ENCODE measurements at regions of chr9 and their contacts with region 1.

Region 1: DNA sequence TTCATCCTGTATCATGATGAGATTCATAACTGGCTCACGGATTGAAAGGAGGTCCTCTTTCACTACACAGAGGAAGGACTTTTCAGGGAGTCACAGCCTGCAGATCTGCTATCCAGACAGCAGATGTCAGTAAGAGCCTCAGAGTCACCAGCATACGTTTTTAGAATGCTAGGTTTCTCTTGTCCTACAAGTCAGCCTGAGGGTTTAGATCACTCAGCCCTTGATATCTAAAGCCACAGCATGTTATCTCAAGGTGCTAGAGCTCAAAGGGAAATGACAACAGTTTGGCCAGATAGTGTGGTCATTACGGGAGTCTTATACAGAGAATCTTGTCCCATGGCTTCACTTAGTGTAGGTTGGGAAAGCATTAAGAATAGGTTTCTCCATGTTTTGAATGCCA is 30.9 kb upstream of the SLC46A2 start:
- DNase-seq: no peak
- H3K4me3 ChIP-seq: no peak overlapping the region
- H3K27ac ChIP-seq: no peak overlapping the region
- H3K4me1 ChIP-seq: no peaks in the 10 kb centered on the region
- H3K27me3 ChIP-seq: peaks cover 0 to 5% (median 2%) of the 10 kb centered on the region in 4 experiments; a peak in 3 of 7 replicates
- CTCF ChIP-seq: peak in 2 of 3 experiments; percentile 75 to 78; a peak in 3 of 4 replicates
- EP300 ChIP-seq: no peak
- POLR2A ChIP-seq: no peak
- RAD21 ChIP-seq: peak; percentile 76 to 83

Region 2: DNA sequence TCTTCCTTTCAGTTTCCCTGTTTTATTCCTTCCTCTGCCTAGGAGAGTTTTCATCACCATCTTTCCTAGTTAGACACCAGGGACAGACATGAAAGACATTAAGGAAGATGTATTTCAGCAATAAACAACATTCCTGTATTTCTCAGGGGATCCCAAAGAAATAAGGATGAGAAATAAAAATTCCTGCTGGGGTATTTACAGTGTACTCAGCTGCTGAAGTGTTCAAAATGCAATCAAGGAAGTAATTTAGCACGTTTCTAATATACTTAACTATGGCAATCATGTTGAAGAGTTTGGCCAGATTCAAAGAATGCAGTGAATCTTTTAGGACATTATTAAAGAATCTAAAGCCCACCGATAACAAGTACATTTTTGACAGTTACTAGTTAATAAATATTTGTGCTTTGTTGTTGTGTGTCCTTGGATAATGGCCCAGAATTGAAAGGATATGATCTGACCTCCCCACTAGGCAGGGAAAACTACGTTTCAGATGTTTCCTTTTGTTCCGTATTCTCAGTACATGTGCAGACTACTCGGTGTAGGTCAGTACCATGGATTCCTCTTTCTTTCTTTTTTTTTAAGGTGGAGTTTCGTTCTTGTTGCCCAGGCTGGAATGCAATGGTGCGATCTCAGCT is 250.4 kb before region 1 on chr9:
- CTCF ChIA-PET with region 1: no interaction called
- POLR2A ChIA-PET with region 1: no interaction called
- DNase-seq: no peak
- H3K4me3 ChIP-seq: no peak overlapping the region
- H3K27ac ChIP-seq: no peak overlapping the region
- H3K4me1 ChIP-seq: no peaks in the 10 kb centered on the region
- H3K27me3 ChIP-seq: no peaks in the 10 kb centered on the region
- CTCF ChIP-seq: no peak
- EP300 ChIP-seq: no peak
- POLR2A ChIP-seq: no peak
- RAD21 ChIP-seq: no peak

Region 3: GRCh38 chr9:112905084-112905483 is 16.5 kb before region 1 on chr9:
- CTCF ChIA-PET with region 1: interaction called, 43 read pairs
- POLR2A ChIA-PET with region 1: no interaction called
- DNase-seq: no peak
- H3K4me3 ChIP-seq: no peak overlapping the region
- H3K27ac ChIP-seq: no peak overlapping the region
- H3K4me1 ChIP-seq: no peaks in the 10 kb centered on the region
- H3K27me3 ChIP-seq: no peaks in the 10 kb centered on the region; a peak in 1 of 7 replicates
- CTCF ChIP-seq: no peak
- EP300 ChIP-seq: no peak
- POLR2A ChIP-seq: no peak
- RAD21 ChIP-seq: no peak

Region 4: DNA sequence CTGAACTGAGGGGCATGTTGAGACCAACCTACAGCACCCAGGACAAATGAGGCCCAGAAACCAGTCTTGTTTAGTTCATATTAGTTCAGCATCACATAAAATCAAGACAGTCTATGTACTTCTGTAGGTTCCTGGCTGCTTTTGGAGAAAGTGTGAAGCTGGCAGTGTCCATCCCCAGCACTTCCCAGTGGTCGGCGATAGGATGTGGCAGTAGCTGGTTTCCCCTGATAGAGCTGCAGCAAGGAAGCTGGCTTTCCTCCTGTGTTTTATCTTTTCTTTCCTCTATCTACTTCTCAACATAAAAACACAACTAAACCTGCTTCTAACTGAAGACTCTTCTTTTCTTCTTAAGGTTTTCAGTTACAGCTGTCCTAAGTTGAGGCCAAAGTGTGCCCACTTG is 12.1 kb after region 1 on chr9:
- CTCF ChIA-PET with region 1: interaction called, 47 read pairs
- POLR2A ChIA-PET with region 1: no interaction called
- DNase-seq: no peak
- H3K4me3 ChIP-seq: no peak overlapping the region
- H3K27ac ChIP-seq: no peak overlapping the region
- H3K4me1 ChIP-seq: no peaks in the 10 kb centered on the region
- H3K27me3 ChIP-seq: peaks cover 0 to 10% (median 0%) of the 10 kb centered on the region in 4 experiments; a peak in 2 of 7 replicates
- CTCF ChIP-seq: no peak
- EP300 ChIP-seq: no peak
- POLR2A ChIP-seq: no peak
- RAD21 ChIP-seq: no peak

Region 5: GRCh38 chr9:112945620-112946208 is 24.2 kb after region 1 on chr9:
- CTCF ChIA-PET with region 1: interaction called, 47 read pairs
- POLR2A ChIA-PET with region 1: no interaction called
- DNase-seq: peak; percentile 41 to 94
- H3K4me3 ChIP-seq: no peak overlapping the region
- H3K27ac ChIP-seq: no peak overlapping the region
- H3K4me1 ChIP-seq: no peaks in the 10 kb centered on the region
- H3K27me3 ChIP-seq: peaks cover 0 to 3% (median under 1%) of the 10 kb centered on the region in 4 experiments; a peak in 3 of 7 replicates
- CTCF ChIP-seq: peak; percentile 90 to 98 (median 91)
- EP300 ChIP-seq: no peak
- POLR2A ChIP-seq: no peak
- RAD21 ChIP-seq: peak; percentile 61 to 71

Region 6: GRCh38 chr9:112971415-112971814 is 49.9 kb after region 1 on chr9:
- CTCF ChIA-PET with region 1: interaction called, 41 read pairs
- POLR2A ChIA-PET with region 1: no interaction called
- DNase-seq: peak; percentile 3 to 54
- H3K4me3 ChIP-seq: no peak overlapping the region
- H3K27ac ChIP-seq: no peak overlapping the region
- H3K4me1 ChIP-seq: no peaks in the 10 kb centered on the region
- H3K27me3 ChIP-seq: peaks cover 0 to 5% (median 0%) of the 10 kb centered on the region in 4 experiments; a peak in 3 of 7 replicates
- CTCF ChIP-seq: peak; percentile 74 to 91 (median 83)
- EP300 ChIP-seq: no peak
- POLR2A ChIP-seq: no peak
- RAD21 ChIP-seq: peak; percentile 68 to 77

Measured in H1 (cell line).